ENCODE measurements at regions of chr18 and their contacts with region 1.

Region 1: DNA sequence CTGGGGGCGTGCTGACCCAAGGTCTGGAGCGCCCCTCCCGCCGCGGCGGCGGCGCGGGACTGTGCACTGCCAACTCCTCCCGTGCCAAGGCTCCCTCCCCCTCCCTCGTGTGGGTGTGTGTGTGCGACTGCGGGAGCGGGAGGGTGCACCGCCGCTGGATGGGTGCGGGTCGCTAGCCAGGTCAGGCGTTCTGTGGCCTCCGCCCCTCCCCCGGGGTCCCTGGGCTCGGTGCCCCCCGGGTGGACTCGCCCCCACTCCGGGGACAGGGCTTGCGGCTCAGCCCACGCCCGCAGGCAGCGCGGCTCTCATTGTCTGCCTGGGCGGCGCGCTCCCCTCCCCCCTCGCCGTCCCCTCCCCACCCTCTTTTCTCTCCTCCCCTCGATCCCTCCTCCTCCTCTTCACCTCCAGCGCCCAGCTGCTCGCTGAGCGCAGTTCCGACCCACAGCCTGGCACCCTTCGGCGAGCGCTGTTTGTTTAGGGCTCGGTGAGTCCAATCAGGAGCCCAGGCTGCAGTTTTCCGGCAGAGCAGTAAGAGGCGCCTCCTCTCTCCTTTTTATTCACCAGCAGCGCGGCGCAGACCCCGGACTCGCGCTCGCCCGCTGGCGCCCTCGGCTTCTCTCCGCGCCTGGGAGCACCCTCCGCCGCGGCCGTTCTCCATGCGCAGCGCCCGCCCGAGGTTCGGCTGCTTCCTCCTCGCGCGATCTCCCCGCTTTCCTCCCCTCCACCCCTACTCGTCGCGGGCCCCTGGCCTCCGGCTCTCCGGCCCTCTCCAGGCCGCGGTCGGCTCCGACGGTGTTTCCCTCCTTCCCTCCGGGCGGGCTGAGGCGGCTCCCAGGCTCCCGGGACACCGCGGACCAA is at the start of gene GATA6:
- DNase-seq: peak; percentile 92
- H3K4me3 ChIP-seq: peak within 1 kb of the TSS; percentile 80
- H3K27ac ChIP-seq: peak within 1 kb of the TSS; percentile 89 to 97
- H3K4me1 ChIP-seq: peaks cover 12% of the 10 kb centered on the region
- H3K27me3 ChIP-seq: peaks cover 3% of the 10 kb centered on the region
- CTCF ChIP-seq: peak in 2 of 3 experiments; percentile 32 to 47
- POLR2A ChIP-seq: no peak
- total RNA-seq, gene GATA6: 50.5 to 54.6 TPM

Region 2: GRCh38 chr18:21997207-21998143 is 171.8 kb before region 1 on chr18:
- intact Hi-C with region 1: loop called (anchors 10 kb)
- DNase-seq: no peak
- H3K4me3 ChIP-seq: no peak overlapping the region
- H3K27ac ChIP-seq: no peak overlapping the region
- H3K4me1 ChIP-seq: peaks cover 6% of the 10 kb centered on the region
- H3K27me3 ChIP-seq: no peaks in the 10 kb centered on the region
- CTCF ChIP-seq: peak; percentile 57 to 83 (median 76)
- POLR2A ChIP-seq: no peak

Region 3: GRCh38 chr18:22348521-22349316 is 179.5 kb after region 1 on chr18:
- intact Hi-C with region 1: loop called (anchors 5 kb)
- DNase-seq: peak; percentile 68
- H3K4me3 ChIP-seq: peak overlapping the region; percentile 56 to 62
- H3K27ac ChIP-seq: peak overlapping the region; percentile 79 to 89
- H3K4me1 ChIP-seq: peaks cover 36% of the 10 kb centered on the region
- H3K27me3 ChIP-seq: no peaks in the 10 kb centered on the region
- CTCF ChIP-seq: no peak
- POLR2A ChIP-seq: no peak

Region 4: DNA sequence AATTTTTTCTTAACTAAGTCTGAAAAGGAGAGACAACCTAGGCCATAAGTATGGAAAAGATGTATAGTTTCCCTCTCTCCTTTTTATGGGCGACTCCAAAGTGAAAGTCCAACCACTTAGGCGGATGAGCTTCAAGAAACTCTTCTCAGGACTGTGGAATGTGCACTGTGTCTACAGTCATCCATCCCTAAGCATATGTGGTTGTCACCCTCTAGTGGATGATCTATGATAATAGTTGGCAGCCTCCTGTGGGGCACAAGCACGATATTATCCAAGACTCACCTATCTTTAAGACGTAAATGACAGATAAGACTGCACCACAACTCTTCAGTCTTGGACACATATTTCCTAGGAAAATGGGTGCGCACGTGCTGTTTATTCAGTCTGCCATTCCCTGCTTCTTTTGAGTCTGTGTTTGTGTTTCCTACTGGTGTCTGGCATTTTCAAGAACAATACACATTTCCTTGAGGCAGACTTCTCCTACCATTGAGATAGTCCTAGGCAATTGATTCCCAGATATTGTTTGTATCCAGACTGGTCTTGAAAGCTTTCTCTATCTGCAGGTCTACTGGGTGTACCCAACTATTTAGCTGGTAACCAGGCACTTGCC is 394.0 kb after region 1 on chr18:
- intact Hi-C with region 1: loop called (anchors 5 kb)
- DNase-seq: peak; percentile 64
- H3K4me3 ChIP-seq: no peak overlapping the region
- H3K27ac ChIP-seq: no peak overlapping the region
- H3K4me1 ChIP-seq: peaks cover 4% of the 10 kb centered on the region
- H3K27me3 ChIP-seq: no peaks in the 10 kb centered on the region
- CTCF ChIP-seq: peak; percentile 61 to 85 (median 72)
- POLR2A ChIP-seq: no peak